ENCODE measurements at regions of chr22 and their contacts with region 1.

Region 1: GRCh38 chr22:40270748-40271373 is 75.4 kb upstream of the ADSL start:
- DNase-seq: no peak
- H3K4me3 ChIP-seq: no peak overlapping the region
- H3K27ac ChIP-seq: no peak overlapping the region
- H3K4me1 ChIP-seq: peaks cover 15% of the 10 kb centered on the region
- H3K27me3 ChIP-seq: no peaks in the 10 kb centered on the region
- CTCF ChIP-seq: no peak
- POLR2A ChIP-seq: no peak

Region 2: DNA sequence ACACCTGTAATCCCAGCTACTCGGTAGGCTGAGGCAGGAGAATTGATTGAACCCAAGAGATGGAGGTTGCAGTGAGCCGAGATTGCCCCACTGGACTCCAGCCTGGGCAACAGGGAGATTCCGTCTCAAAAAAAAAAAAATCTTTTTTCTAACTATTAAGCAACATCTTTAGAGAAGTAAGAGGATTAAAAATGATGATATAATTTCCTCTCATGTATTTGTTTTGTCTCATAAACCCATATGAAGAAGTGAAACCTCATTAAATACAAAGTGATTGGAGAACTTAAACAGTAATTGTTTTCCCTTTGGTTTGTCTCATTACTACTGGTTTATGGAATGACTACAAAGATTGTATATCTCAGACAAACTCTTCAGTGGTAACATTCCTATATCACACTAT is 1721.4 kb before region 1 on chr22:
- intact Hi-C with region 1: loop called (anchors 5 kb)
- DNase-seq: no peak
- H3K4me3 ChIP-seq: no peak overlapping the region
- H3K27ac ChIP-seq: no peak overlapping the region
- H3K4me1 ChIP-seq: no peaks in the 10 kb centered on the region
- H3K27me3 ChIP-seq: no peaks in the 10 kb centered on the region
- CTCF ChIP-seq: no peak
- POLR2A ChIP-seq: no peak